ENCODE measurements at regions of chr19 and their contacts with region 1.

Region 1: GRCh38 chr19:17775245-17775916 is 19.6 kb upstream of the B3GNT3 start:
- DNase-seq: peak in 4 of 7 donors; percentile 32 to 77 (median 48)
- H3K4me3 ChIP-seq: no peak overlapping the region
- H3K27ac ChIP-seq: no peak overlapping the region
- H3K4me1 ChIP-seq: peaks cover 0 to 6% of the 10 kb centered on the region in 2 donors
- H3K27me3 ChIP-seq: peaks cover 6% of the 10 kb centered on the region
- CTCF ChIP-seq: peak in 5 of 6 experiments; percentile 23 to 50 (median 38)
- POLR2A ChIP-seq: no peak

Region 2: GRCh38 chr19:17448131-17448967 is 327.0 kb before region 1 on chr19 and contains the start of gene TMEM221:
- intact Hi-C with region 1: loop called in 1 of 2 experiments (anchors 10 kb)
- DNase-seq: peak; percentile 56 to 76 (median 62)
- H3K4me3 ChIP-seq: peak within 1 kb of the TSS in 3 of 4 donors; percentile 18 to 70 (median 51)
- H3K27ac ChIP-seq: peak within 1 kb of the TSS in 3 of 5 donors; percentile 26 to 70 (median 70)
- H3K4me1 ChIP-seq: peaks cover 0 to 3% of the 10 kb centered on the region in 2 donors
- H3K27me3 ChIP-seq: no peaks in the 10 kb centered on the region
- CTCF ChIP-seq: peak; percentile 26 to 58 (median 41)
- POLR2A ChIP-seq: peak in 1 of 2 donors; percentile 19
- total RNA-seq, gene TMEM221: 0.22 to 8.7 (median 5.4) TPM

Region 3: DNA sequence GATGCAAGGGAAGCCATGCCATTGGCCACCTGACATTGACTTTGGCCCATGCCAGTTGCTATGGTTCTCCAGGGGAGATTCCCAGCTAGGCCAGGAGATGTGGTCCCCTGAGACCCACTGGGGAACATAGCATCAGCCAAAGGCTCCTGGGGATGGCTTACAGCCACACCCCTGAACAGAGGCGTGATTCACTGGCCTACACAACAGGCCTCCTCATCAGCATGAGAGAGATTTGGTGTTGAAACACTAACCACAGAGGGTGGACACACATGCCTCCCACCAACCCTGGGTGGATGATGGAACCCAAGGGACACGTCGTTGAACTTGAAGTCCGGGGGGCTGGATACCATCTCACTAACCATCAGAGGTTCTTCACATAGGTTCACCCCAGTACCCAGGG is 484.5 kb after region 1 on chr19:
- intact Hi-C with region 1: no loop called
- DNase-seq: no peak
- H3K4me3 ChIP-seq: no peak overlapping the region
- H3K27ac ChIP-seq: no peak overlapping the region
- H3K4me1 ChIP-seq: peaks cover 6 to 14% of the 10 kb centered on the region in 2 donors
- H3K27me3 ChIP-seq: no peaks in the 10 kb centered on the region
- CTCF ChIP-seq: no peak
- POLR2A ChIP-seq: no peak

Measured in adrenal gland (tissue), 19 donors.